Left ventricle myocardium inferior (tissue), 1 donor: ENCODE measurements at regions of chr1 and their contacts with region 1.

Region 1: GRCh38 chr1:40849801-40850592 is 12.2 kb downstream of the CITED4 start:
- DNase-seq: peak; percentile 62
- H3K4me3 ChIP-seq: no peak overlapping the region
- H3K27ac ChIP-seq: no peak overlapping the region
- H3K4me1 ChIP-seq: peaks cover 5% of the 10 kb centered on the region
- H3K27me3 ChIP-seq: no peaks in the 10 kb centered on the region
- CTCF ChIP-seq: peak; percentile 93

Region 2: GRCh38 chr1:40774266-40774998 is 75.6 kb before region 1 on chr1:
- intact Hi-C with region 1: loop called (anchors 10 kb)
- DNase-seq: peak; percentile 58
- H3K4me3 ChIP-seq: no peak overlapping the region
- H3K27ac ChIP-seq: peak overlapping the region; percentile 17
- H3K4me1 ChIP-seq: peaks cover 18% of the 10 kb centered on the region
- H3K27me3 ChIP-seq: no peaks in the 10 kb centered on the region
- CTCF ChIP-seq: peak; percentile 85

Region 3: DNA sequence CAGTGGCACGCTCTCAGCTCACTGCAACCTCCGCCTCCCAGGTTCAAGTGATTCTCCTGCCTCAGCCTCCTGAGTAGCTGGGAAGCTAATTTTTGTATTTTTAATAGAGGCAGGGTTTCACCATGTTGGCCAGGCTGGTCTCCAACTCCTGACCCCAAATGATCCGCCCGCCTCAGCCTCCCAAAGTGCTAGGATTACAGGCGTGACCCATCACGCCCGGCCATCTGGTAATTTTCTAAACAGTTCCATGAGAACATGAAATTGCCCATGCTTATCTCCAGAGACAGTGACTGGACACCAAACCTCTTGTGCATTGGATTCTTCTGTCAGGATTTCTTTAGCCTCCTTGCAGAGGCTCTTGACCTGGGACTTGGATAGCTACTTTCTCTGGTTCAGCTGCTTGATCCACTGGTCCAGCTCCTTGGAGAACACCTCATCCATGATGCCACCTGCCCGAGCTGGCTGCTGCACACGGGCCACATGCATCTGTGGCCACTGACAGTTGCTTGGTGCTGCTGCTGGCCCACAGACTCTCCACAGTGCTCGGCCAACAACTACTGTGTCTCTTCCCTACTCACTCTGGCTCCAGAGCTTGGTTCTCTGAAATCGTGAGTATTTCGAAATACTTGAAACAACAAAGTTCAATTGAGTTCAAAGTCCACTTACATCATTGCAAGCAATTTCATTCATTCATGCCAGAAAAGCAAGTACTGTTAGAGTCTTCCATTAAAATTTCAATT is 89.5 kb after region 1 on chr1:
- intact Hi-C with region 1: no loop called
- DNase-seq: peak; percentile 58
- H3K4me3 ChIP-seq: no peak overlapping the region
- H3K27ac ChIP-seq: peak overlapping the region; percentile 61
- H3K4me1 ChIP-seq: peaks cover 4% of the 10 kb centered on the region
- H3K27me3 ChIP-seq: no peaks in the 10 kb centered on the region
- CTCF ChIP-seq: no peak